ENCODE measurements at regions of chr1 and their contacts with region 1.

Region 1: DNA sequence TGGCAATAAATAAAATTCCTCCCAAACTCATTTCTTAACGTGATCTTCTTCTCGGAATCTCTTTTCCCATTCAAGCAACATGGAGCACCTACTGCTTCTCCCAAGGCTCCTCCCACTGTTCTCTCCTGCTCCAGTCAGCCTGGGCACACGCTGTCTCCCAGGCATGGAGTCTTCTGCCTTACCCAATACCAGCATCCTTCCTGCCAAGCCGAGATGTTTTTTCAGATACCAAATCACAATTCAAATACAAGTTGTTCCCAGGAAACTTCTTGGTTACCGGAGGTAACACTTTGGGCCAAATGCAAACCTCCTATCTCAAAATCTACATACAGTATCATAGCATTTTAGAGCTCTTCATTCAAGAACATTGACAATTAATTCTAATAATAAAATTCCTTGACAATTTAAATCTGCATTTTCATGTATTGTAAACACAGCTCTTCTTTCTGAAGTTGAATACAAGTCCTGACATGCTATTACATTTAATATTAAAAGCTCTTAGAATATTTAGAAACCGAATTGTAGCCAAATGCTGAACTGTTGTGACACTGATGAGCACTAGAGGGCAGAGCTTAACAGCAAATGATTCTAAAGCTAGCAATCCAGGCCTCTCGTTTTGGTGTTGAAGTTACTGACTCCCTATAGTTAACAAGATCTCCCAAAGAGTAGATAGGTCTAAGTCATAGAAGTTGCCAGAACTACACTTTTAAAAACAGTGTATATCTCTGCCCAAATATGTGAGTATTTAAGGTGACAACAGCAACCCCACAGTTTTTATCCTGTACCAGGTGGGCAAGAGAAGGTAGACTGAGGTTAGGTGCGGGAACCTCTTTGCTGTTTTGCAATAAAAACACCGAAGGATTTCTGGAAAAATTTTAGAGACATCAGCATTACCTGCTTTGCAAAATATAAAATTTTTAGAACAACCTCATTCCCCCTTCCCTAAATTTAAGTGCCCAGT is 52.3 kb downstream of the BCAR3 start:
- DNase-seq: peak; percentile 48 to 71 (median 52)
- ATAC-seq: peak; percentile 83
- H3K4me3 ChIP-seq: no peak overlapping the region
- H3K27ac ChIP-seq: no peak overlapping the region
- H3K4me1 ChIP-seq: no peaks in the 10 kb centered on the region
- H3K27me3 ChIP-seq: no peaks in the 10 kb centered on the region
- CTCF ChIP-seq: peak; percentile 70 to 95 (median 74)
- EP300 ChIP-seq: no peak
- POLR2A ChIP-seq: no peak
- RAD21 ChIP-seq: peak; percentile 99

Region 2: DNA sequence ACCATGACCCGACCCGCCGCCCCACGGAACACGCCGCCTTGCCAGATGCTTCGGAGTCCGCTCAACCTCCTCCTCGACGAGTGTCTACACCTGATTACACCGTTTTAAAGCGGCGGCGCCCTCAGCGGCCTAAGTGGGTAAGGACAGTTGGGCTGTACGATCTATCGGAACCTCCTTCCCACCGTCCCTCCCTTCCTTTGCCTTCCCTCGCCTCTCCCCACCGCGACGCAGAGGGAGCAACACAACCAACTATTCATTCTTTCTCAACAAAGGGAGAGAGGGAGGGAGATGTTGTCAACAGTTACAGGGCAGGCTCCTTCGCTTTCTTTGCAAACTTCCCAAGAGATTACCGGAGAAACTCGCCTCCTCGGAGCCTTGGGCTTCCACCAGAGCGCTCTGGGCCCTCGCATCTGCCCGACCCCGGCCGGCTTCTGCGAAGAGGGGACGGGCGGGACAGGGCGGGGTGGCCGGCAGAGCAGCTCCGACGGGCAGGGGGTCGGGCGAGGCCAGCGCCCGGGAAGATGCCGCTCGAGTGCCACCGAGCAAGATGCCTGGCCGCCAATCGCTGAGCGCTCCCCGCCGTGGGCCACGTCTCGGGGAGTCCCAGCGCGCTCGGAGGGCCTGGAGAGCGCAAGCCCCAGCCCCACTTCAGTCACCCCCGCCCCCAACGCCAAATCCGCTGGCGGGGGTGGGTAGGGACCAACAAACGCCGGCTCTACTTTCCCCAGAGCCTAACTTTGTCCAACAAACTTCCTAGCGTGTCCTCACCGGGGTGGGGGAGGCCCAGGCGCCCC is 51.6 kb after region 1 on chr1:
- CTCF ChIA-PET with region 1: interaction called, 4 read pairs
- POLR2A ChIA-PET with region 1: no interaction called
- in situ Hi-C with region 1: no loop called
- intact Hi-C with region 1: loop called (anchors 2 kb)
- DNase-seq: peak; percentile 76 to 78 (median 77)
- ATAC-seq: peak; percentile 94
- H3K4me3 ChIP-seq: peak overlapping the region; percentile 43
- H3K27ac ChIP-seq: no peak overlapping the region
- H3K4me1 ChIP-seq: peaks cover 2 to 15% of the 10 kb centered on the region in 2 experiments; a peak in 4 of 5 replicates
- H3K27me3 ChIP-seq: peaks cover 19 to 42% of the 10 kb centered on the region in 2 experiments; a peak in 4 of 5 replicates
- CTCF ChIP-seq: peak; percentile 54 to 73 (median 60)
- EP300 ChIP-seq: no peak
- POLR2A ChIP-seq: no peak
- RAD21 ChIP-seq: peak; percentile 49 to 67

Region 3: DNA sequence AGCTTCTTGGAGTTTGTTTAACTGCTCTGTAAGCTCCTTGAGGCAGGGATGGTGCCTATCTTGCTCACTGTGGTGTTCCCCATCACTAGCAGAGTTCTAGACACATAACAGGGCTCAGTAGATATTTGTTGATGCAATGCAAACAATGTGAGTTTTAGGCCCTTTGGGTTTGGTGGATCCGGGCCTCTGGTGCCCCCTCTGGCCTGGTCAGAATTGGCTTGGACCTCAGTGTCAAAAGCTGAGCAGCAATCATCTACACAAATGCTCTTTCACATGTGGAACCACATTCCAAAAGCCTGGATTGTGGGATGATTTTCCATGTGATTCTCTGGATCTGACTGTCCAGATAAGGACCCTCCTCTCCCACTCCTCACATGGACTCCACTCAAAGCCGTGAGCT is 105.6 kb after region 1 on chr1:
- CTCF ChIA-PET with region 1: interaction called, 6 read pairs
- POLR2A ChIA-PET with region 1: no interaction called
- in situ Hi-C with region 1: loop called (anchors 10 kb)
- intact Hi-C with region 1: loop called (anchors 5 kb)
- DNase-seq: peak; percentile 14 to 25 (median 17)
- ATAC-seq: peak; percentile 59
- H3K4me3 ChIP-seq: no peak overlapping the region
- H3K27ac ChIP-seq: no peak overlapping the region
- H3K4me1 ChIP-seq: no peaks in the 10 kb centered on the region
- H3K27me3 ChIP-seq: peaks cover 28 to 60% of the 10 kb centered on the region in 2 experiments; a peak in 4 of 5 replicates
- CTCF ChIP-seq: peak; percentile 49 to 53 (median 51)
- EP300 ChIP-seq: no peak
- POLR2A ChIP-seq: no peak
- RAD21 ChIP-seq: peak in 1 of 2 experiments; percentile 43; a peak in 2 of 4 replicates

Region 4: GRCh38 chr1:93899543-93900207 is 270.3 kb after region 1 on chr1:
- CTCF ChIA-PET with region 1: no interaction called
- POLR2A ChIA-PET with region 1: no interaction called
- in situ Hi-C with region 1: no loop called
- intact Hi-C with region 1: no loop called
- DNase-seq: no peak
- ATAC-seq: no peak
- H3K4me3 ChIP-seq: no peak overlapping the region
- H3K27ac ChIP-seq: no peak overlapping the region
- H3K4me1 ChIP-seq: no peaks in the 10 kb centered on the region
- H3K27me3 ChIP-seq: no peaks in the 10 kb centered on the region
- CTCF ChIP-seq: no peak
- EP300 ChIP-seq: no peak
- POLR2A ChIP-seq: no peak
- RAD21 ChIP-seq: no peak

Measured in K562 (cell line).